BJ (cell line): ENCODE measurements at regions of chr7 and their contacts with region 1.

Region 1: DNA sequence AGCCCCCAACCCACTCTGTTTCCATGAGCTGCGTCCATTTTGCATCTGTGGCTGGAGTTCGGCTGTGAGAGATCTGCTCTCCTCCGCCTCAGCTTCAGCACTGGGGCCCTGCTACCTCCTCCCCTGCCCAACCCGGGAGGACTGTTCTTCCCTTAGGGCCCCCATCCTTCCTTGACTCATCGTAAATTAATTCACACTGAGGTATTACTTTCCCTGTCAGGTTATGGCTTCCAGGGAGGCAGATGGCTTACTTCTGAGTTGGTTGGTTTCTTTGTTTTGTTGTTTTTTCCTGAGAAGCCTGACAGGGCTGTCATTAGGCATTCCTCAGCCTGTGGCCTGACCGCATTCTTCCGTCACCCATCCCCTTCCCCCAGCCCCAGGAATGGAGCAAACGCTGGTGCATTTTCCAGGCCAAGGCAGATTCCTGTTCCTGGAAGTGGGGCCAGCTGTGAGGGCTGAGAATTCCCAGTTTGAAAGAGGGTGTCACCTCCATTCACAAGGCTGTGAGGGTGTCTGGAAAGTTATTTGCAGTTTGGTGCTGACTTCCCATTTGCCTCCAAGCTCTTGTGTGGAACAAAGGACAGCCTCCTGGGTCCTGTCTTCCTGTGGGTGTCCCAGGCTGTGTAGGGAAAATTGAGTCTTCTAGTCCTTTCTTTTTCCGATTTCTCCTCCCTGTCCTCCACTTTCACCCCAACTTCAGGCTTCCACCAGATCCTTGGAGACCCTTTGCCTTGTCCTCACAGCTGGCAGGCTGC is 11.7 kb downstream of the CPA5 start:
- DNase-seq: peak; percentile 96
- H3K4me3 ChIP-seq: no peak overlapping the region
- H3K27me3 ChIP-seq: no peaks in the 10 kb centered on the region
- CTCF ChIP-seq: no peak

Region 2: GRCh38 chr7:130277763-130278643 is 78.3 kb before region 1 on chr7:
- CTCF ChIA-PET with region 1: interaction called, 10 read pairs
- POLR2A ChIA-PET with region 1: no interaction called
- DNase-seq: no peak
- H3K4me3 ChIP-seq: no peak overlapping the region
- H3K27me3 ChIP-seq: no peaks in the 10 kb centered on the region
- CTCF ChIP-seq: peak; percentile 62